K562 (cell line): ENCODE measurements at regions of chr3 and their contacts with region 1.

Region 1: GRCh38 chr3:167929968-167930367 is 165.8 kb downstream of the GOLIM4 start:
- DNase-seq: no peak
- ATAC-seq: no peak
- H3K4me3 ChIP-seq: no peak overlapping the region
- H3K27ac ChIP-seq: no peak overlapping the region
- H3K4me1 ChIP-seq: no peaks in the 10 kb centered on the region
- H3K27me3 ChIP-seq: no peaks in the 10 kb centered on the region
- CTCF ChIP-seq: no peak
- EP300 ChIP-seq: no peak
- POLR2A ChIP-seq: no peak
- RAD21 ChIP-seq: no peak

Region 2: DNA sequence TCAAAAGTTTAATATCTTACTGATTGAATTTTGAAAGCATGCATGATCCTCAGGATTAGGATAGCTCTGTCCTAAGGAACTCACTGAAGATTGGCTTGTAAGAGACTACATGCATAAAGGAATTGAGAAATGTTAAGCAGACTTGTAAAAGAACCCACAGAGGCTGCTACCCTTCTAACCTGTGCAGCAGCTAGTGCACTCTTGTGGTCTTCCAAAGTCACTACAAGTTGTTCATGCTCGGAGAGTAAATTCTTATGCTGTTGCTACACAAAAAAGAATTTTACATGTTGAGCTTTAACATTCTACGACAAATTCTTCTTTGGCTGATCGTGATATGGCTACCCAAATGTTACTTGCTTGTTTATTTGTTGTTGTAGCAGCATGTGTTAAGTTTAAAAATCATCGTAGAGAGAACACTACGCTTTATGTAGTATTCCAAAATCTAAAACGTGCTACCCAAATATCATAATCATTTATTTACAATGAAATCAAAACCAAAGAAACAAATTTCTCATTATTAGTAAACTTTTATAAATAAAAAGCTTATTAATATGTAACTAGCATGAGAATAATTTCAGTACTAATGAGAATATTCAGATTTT is 110.7 kb after region 1 on chr3:
- CTCF ChIA-PET with region 1: interaction called, 4 read pairs
- POLR2A ChIA-PET with region 1: no interaction called
- in situ Hi-C with region 1: loop called (anchors 5 kb)
- intact Hi-C with region 1: loop called (anchors 1 kb)
- DNase-seq: peak in 3 of 4 experiments; percentile 22 to 50 (median 23)
- ATAC-seq: peak; percentile 90
- H3K4me3 ChIP-seq: no peak overlapping the region
- H3K27ac ChIP-seq: no peak overlapping the region
- H3K4me1 ChIP-seq: no peaks in the 10 kb centered on the region
- H3K27me3 ChIP-seq: no peaks in the 10 kb centered on the region
- CTCF ChIP-seq: peak; percentile 50 to 65 (median 62); a peak in 4 of 6 replicates
- EP300 ChIP-seq: no peak
- POLR2A ChIP-seq: no peak
- RAD21 ChIP-seq: peak; percentile 88 to 93

Region 3: DNA sequence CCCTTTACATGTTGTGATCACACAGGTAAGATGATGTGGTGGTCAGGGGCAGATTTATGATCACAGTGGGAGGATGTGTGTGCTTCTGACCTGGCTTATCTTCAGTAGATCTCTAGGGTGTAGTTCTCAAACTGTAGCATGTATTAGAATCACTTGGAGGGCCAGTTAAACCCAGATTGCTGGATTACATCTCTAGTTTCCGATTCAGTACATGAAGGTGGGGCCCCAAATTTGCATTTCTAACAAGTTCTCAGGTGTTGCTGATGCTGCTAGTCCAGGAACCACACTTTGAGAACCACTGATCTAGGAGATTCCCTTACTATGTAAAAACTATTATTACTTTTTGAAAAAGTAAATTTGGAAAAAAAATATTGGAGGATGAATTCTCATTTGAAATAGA is 365.1 kb after region 1 on chr3:
- CTCF ChIA-PET with region 1: no interaction called
- POLR2A ChIA-PET with region 1: no interaction called
- in situ Hi-C with region 1: no loop called
- intact Hi-C with region 1: no loop called
- DNase-seq: no peak
- ATAC-seq: no peak
- H3K4me3 ChIP-seq: no peak overlapping the region
- H3K27ac ChIP-seq: no peak overlapping the region
- H3K4me1 ChIP-seq: no peaks in the 10 kb centered on the region
- H3K27me3 ChIP-seq: no peaks in the 10 kb centered on the region
- CTCF ChIP-seq: no peak
- EP300 ChIP-seq: no peak
- POLR2A ChIP-seq: no peak
- RAD21 ChIP-seq: no peak